A549 (cell line): ENCODE measurements at regions of chr7 and their contacts with region 1.

Region 1: DNA sequence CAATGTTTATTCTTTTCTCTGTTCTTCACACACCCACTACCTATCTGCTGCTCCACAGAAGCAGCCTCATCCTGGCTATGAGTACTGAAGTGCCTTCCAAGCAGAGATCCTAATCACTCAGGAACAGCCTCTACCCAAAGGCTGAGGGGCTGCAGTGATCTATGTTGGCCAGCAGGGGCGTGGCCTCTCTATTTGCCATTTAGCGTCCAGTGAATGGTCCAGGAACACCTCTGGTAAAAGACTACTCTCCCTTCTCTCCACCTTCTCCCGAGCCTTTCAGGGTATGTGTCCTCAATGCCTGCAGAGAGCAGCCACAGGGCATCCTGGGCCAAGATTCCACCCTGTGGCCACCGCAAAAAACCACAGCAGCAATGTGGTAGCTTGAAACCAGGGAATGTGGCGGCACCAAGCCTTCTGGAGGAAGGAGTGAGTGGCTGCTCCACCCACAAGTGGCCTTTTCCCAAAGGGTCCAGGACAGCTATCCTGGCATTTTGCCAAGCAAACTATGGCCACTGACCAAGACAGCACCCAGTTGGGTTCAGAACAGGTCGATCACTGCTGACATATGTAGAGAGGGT is 70.9 kb downstream of the SYPL1 start:
- DNase-seq: peak; percentile 64 to 85
- ATAC-seq: peak; percentile 71 to 84
- H3K4me3 ChIP-seq: no peak overlapping the region
- H3K27ac ChIP-seq: no peak overlapping the region
- H3K4me1 ChIP-seq: 0 out of 3 replicates have a peak, but pooled peaks cover 2% of the 10 kb centered on the region
- CTCF ChIP-seq: peak; percentile 52
- EP300 ChIP-seq: no peak
- POLR2A ChIP-seq: no peak
- RAD21 ChIP-seq: peak in 1 of 2 experiments; percentile 30; a peak in 2 of 5 replicates

Region 2: GRCh38 chr7:105567024-105567423 is 474.2 kb before region 1 on chr7:
- CTCF ChIA-PET with region 1: no interaction called
- POLR2A ChIA-PET with region 1: no interaction called
- DNase-seq: no peak
- ATAC-seq: no peak
- H3K4me3 ChIP-seq: no peak overlapping the region
- H3K27ac ChIP-seq: no peak overlapping the region
- H3K4me1 ChIP-seq: no peaks in the 10 kb centered on the region
- CTCF ChIP-seq: no peak
- EP300 ChIP-seq: no peak
- POLR2A ChIP-seq: no peak
- RAD21 ChIP-seq: no peak

Region 3: DNA sequence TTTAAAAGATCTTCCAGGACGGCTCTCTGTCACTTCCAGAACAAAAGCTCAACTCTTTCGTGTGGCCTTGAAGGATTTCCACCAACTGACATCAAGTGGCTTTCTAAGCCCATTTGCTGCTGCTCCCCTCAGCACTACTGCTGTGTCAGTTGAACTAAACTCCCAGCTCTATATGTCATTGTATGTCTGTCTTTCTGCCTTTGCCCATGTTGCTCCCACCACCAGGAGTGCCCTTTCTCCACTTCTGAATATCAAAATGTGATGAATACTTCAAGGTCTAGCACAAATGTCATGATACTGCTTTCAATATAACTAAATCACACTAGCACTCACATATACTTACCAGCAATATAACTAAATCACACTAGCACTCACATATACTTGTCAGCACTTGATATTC is 303.1 kb before region 1 on chr7:
- CTCF ChIA-PET with region 1: interaction called, 10 read pairs
- POLR2A ChIA-PET with region 1: no interaction called
- DNase-seq: no peak
- ATAC-seq: no peak
- H3K4me3 ChIP-seq: no peak overlapping the region
- H3K27ac ChIP-seq: no peak overlapping the region
- H3K4me1 ChIP-seq: peaks cover 5% of the 10 kb centered on the region; the same call in 1 of the 3 replicates
- CTCF ChIP-seq: no peak
- EP300 ChIP-seq: no peak
- POLR2A ChIP-seq: no peak
- RAD21 ChIP-seq: no peak

Region 4: DNA sequence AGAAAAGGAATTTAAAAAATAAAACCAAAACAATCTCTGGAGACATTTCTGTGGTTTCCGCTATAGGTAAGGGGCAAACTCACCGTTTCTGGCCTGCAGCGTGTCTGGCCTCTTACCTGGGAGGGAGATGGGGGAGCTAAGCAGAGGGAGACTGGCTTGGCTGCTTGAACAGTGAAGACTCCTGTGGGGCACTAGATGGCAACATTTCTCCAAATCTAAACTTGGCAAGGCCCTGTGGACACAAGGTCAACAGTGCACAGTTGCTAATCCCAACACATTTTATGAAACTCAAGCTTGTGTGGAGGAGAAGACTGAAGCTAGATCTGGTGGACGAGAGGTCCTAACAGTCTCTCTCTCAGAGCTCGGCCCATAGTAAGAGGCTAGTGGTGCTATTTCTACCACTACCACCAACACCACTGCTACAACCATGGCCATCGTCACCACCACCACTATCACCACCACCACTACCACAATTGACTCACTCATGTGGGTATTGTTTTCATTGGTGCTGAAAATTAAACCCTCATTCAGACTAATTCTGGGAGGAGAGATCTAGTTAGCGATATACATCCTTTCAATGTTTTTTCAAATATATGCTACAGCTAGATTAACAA is 106.5 kb before region 1 on chr7:
- CTCF ChIA-PET with region 1: interaction called, 19 read pairs
- POLR2A ChIA-PET with region 1: no interaction called
- DNase-seq: peak in 1 of 2 experiments; percentile 55
- ATAC-seq: peak; percentile 64 to 90; a peak in 4 of 6 replicates
- H3K4me3 ChIP-seq: no peak overlapping the region
- H3K27ac ChIP-seq: no peak overlapping the region
- H3K4me1 ChIP-seq: no peaks in the 10 kb centered on the region
- CTCF ChIP-seq: peak; percentile 33; the same call in 2 of the 3 replicates
- EP300 ChIP-seq: no peak
- POLR2A ChIP-seq: no peak
- RAD21 ChIP-seq: peak; percentile 35 to 57; a peak in 4 of 5 replicates

Region 5: DNA sequence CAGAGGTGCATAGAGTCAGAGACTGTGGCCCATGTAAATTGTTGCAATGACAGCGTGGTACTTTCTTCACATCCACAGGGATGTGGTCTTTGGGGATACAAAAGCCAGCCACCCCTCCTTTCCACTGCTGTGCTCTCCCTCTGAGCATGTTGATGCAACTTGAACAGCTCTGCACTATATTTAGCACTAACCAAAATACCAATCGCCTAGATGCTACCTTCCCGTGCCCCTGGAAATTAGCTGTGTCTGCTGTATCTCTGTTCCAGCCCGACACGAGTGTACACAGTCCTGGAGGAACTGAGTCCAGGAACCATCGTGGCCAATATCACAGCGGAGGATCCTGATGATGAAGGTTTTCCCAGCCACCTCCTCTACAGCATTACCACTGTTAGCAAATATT is 40.0 kb before region 1 on chr7:
- CTCF ChIA-PET with region 1: interaction called, 73 read pairs
- POLR2A ChIA-PET with region 1: no interaction called
- DNase-seq: no peak
- ATAC-seq: no peak
- H3K4me3 ChIP-seq: no peak overlapping the region
- H3K27ac ChIP-seq: no peak overlapping the region
- H3K4me1 ChIP-seq: no peaks in the 10 kb centered on the region
- CTCF ChIP-seq: no peak
- EP300 ChIP-seq: no peak
- POLR2A ChIP-seq: no peak
- RAD21 ChIP-seq: no peak

Region 6: GRCh38 chr7:106022193-106022821 is 18.9 kb before region 1 on chr7:
- CTCF ChIA-PET with region 1: interaction called, 121 read pairs
- POLR2A ChIA-PET with region 1: no interaction called
- DNase-seq: no peak
- ATAC-seq: no peak
- H3K4me3 ChIP-seq: no peak overlapping the region
- H3K27ac ChIP-seq: no peak overlapping the region
- H3K4me1 ChIP-seq: no peaks in the 10 kb centered on the region
- CTCF ChIP-seq: no peak
- EP300 ChIP-seq: no peak
- POLR2A ChIP-seq: no peak
- RAD21 ChIP-seq: no peak

Region 7: GRCh38 chr7:106153891-106154449 is 112.7 kb after region 1 on chr7:
- CTCF ChIA-PET with region 1: interaction called, 53 read pairs
- POLR2A ChIA-PET with region 1: no interaction called
- DNase-seq: peak; percentile 75 to 84
- ATAC-seq: peak; percentile 97 to 99
- H3K4me3 ChIP-seq: no peak overlapping the region
- H3K27ac ChIP-seq: no peak overlapping the region
- H3K4me1 ChIP-seq: peaks cover 20% of the 10 kb centered on the region; the same call in 2 of the 3 replicates
- CTCF ChIP-seq: peak; percentile 87
- EP300 ChIP-seq: no peak
- POLR2A ChIP-seq: no peak
- RAD21 ChIP-seq: peak; percentile 98 to 99

Region 8: DNA sequence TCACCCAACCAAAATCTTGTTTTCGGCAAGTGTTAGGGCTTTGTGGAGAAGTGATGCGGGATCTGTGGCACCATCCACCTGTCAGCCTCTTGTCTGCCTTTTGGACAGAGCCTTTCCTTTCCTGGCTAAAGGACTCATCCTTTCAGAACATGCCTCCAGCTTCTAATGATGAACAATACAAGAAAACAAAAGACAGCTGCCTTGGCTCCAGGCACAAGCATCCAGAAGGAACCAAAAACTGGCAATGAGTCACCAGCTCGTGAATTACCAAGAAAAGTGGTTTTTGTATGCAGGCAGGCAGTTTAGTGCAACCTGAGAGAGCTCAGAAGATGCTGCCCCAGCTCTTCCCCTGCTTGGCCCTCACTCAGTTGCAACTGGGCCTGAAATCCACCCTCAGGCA is 328.1 kb after region 1 on chr7:
- CTCF ChIA-PET with region 1: no interaction called
- POLR2A ChIA-PET with region 1: no interaction called
- DNase-seq: no peak
- ATAC-seq: no peak
- H3K4me3 ChIP-seq: no peak overlapping the region
- H3K27ac ChIP-seq: peak overlapping the region; percentile 24 to 32; a peak in 2 of 6 replicates
- H3K4me1 ChIP-seq: peaks cover 5% of the 10 kb centered on the region; the same call in 2 of the 3 replicates
- CTCF ChIP-seq: no peak
- EP300 ChIP-seq: no peak
- POLR2A ChIP-seq: no peak
- RAD21 ChIP-seq: no peak